ENCODE measurements at regions of chr7 and their contacts with region 1.

Region 1: DNA sequence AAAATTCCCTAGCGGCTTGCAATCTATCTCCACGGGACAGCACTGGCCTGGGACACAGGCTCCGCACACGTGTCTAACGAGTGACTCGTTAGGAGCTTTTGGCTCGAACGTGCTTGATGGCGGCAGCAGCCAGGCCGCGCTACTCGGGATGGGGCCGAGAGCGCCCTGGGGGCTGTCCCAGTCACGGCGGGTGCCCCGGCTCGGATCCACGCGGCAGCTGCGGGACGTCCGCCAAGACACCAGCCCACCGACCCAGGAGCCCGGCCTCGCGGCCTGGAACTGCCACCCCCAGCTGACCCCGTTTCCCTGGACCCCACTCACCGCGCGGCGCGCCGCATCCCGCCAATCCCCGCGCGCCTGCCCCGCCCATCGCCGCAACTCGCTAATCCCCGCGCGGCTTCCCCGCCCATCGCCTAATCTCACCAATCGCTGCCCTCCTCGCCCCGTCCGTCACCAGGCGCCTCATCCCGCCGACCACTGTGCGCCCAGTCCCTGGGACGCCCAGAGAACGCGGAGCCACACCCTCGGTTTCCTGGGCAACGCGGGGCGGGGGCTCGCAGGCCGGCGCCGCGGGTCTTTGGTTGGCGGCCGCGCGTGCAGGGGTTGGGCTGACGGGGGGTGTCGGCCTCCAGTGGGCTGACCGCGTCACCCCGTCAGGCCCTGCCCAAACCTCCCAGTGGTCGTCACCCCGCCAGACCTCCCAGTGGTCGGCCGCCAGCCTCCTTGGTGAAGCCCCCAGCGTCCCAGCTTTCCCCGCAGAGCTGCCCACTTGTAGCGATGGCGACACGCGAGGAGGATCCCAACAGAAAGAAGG is at the start of gene POLD2:
- DNase-seq: peak; percentile 97 to 98
- ATAC-seq: peak; percentile 95 to 96
- H3K4me3 ChIP-seq: peak within 1 kb of the TSS; percentile 62 to 92 (median 72)
- H3K27ac ChIP-seq: peak within 1 kb of the TSS; percentile 88 to 95 (median 88)
- H3K4me1 ChIP-seq: peaks cover 19 to 31% of the 10 kb centered on the region in 2 donors
- H3K27me3 ChIP-seq: no peaks in the 10 kb centered on the region
- CTCF ChIP-seq: peak in 2 of 5 experiments; percentile 7 to 10
- POLR2A ChIP-seq: peak; percentile 90 to 93
- total RNA-seq, gene POLD2: 69.4 to 93.0 (median 77.7) TPM

Region 2: DNA sequence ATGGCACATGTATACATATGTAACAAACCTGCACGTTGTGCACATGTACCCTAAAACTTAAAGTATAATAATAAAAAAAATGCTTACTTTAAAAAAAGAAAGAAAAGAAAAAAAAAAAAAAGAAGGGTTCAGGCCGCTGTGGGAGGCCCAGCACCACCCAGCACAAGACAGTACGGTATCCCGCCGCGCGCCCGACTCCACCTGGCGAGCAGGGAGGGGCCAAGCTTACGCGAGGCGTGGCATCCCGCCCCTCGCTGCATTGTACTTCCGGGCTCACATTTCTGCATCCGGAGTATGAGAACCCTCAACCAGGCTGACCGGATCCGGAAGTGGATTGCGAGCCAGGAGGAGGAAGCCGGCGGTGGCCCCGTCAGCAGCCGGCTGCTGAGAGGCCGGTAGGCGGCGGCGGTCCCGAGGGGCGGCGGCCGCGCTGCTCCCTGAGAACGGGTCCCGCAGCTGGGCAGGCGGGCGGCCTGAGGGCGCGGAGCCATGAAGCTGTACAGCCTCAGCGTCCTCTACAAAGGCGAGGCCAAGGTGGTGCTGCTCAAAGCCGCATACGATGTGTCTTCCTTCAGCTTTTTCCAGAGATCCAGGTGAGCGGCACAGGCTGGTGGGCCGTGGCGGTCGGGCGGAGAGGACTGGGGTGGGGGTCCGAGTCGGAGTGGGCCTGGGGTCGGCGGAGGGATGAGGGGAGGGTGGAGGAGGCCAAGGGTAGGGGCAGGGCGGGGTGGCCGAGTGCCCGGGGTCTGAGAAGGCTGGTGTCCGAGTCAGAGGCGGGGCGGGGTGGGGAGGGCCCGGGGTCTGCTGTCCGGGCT is 77.5 kb after region 1 on chr7 and contains the start of gene YKT6:
- in situ Hi-C with region 1: no loop called
- intact Hi-C with region 1: loop called (anchors 2 kb)
- DNase-seq: peak; percentile 93 to 94
- ATAC-seq: peak; percentile 99 to 100
- H3K4me3 ChIP-seq: peak within 1 kb of the TSS; percentile 80 to 98 (median 91)
- H3K27ac ChIP-seq: peak within 1 kb of the TSS; percentile 79 to 91 (median 86)
- H3K4me1 ChIP-seq: peaks cover 14% of the 10 kb centered on the region in 2 donors
- H3K27me3 ChIP-seq: no peaks in the 10 kb centered on the region
- CTCF ChIP-seq: peak; percentile 66 to 74 (median 70)
- POLR2A ChIP-seq: peak; percentile 77 to 92
- total RNA-seq, gene YKT6: 37.9 to 79.5 (median 72.5) TPM

Region 3: DNA sequence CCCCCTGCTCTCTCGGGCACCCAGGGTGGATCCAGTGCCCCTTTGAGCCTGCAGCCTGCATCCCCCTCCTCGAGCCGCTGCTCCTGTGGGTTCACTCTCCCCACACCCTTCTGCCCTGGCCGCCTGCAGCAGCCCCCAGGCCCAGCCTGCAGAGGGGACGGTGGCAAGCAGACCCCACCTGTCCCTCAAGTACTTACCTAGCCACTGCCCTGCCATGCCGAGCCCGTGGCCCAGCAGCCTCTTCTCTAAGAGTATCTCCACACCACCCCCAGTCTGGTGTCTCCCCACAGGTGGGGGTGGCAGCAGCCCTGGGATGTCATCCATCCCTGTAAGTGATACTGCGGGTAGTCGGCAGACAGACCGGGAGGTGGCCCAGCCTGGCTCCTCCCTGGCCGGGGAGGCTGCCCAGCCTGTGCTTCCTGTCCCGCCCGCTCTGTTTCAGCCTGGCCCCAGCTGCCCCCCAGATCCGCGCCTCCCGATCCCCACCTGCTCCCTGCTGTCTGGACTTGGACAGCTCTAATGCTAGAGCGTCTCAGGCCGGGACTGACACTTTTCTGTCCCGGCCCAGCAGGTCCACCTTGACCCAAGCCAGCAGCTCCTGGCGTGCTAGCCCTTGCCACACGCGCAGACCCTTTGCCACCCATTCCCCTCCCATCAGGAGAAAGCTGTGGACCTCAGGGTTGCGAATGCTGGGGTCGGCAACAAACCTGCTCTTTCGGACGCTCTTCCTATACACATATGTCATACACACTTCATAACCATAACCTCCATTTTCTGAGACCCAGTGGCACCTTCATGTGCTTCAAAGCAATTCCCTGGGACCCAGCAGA is 102.4 kb after region 1 on chr7:
- in situ Hi-C with region 1: no loop called
- intact Hi-C with region 1: no loop called
- DNase-seq: peak; percentile 43 to 63
- ATAC-seq: peak; percentile 56 to 70
- H3K4me3 ChIP-seq: peak overlapping the region in 1 of 4 donors; percentile 27
- H3K27ac ChIP-seq: peak overlapping the region; percentile 33 to 70 (median 64)
- H3K4me1 ChIP-seq: peaks cover 9 to 15% of the 10 kb centered on the region in 2 donors
- H3K27me3 ChIP-seq: no peaks in the 10 kb centered on the region
- CTCF ChIP-seq: no peak
- POLR2A ChIP-seq: no peak

Region 4: DNA sequence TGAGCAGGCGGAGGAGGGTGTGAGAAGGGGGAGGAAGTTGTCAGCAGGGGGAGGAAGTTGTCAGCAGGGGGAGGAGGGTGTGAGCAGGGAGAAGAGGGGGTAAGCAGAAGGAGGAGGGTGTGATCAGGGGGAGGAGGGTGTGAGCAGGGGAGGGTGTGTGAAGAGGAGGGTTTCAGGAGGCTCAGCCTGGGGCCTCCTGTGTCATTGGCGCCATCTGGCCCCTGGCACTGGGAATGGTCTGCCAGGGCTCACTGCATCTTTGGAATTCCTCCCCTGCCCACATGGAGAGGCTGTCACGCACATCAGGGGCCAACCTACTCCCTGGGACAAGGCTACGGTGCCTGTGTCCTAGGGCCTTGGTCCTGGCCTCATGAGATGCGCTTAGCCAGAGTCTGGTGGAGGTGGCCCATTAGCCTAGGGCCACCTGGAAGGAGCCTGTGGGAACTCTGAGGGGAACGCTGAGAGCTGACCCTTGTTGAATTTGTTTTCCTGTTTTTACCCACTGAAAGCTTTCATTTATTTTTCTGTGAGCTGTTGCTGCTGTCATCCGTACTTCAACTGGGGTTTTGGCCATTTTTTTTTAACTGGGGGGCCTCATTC is 184.0 kb after region 1 on chr7:
- in situ Hi-C with region 1: no loop called
- intact Hi-C with region 1: loop called (anchors 5 kb)
- DNase-seq: no peak
- ATAC-seq: peak; percentile 26 to 40
- H3K4me3 ChIP-seq: no peak overlapping the region
- H3K27ac ChIP-seq: peak overlapping the region; percentile 1 to 83 (median 41)
- H3K4me1 ChIP-seq: peaks cover 20 to 36% of the 10 kb centered on the region in 2 donors
- H3K27me3 ChIP-seq: no peaks in the 10 kb centered on the region
- CTCF ChIP-seq: no peak
- POLR2A ChIP-seq: no peak

Measured in gastrocnemius medialis (tissue), 4 donors.